A673 (cell line): ENCODE measurements at regions of chr11 and their contacts with region 1.

Region 1: DNA sequence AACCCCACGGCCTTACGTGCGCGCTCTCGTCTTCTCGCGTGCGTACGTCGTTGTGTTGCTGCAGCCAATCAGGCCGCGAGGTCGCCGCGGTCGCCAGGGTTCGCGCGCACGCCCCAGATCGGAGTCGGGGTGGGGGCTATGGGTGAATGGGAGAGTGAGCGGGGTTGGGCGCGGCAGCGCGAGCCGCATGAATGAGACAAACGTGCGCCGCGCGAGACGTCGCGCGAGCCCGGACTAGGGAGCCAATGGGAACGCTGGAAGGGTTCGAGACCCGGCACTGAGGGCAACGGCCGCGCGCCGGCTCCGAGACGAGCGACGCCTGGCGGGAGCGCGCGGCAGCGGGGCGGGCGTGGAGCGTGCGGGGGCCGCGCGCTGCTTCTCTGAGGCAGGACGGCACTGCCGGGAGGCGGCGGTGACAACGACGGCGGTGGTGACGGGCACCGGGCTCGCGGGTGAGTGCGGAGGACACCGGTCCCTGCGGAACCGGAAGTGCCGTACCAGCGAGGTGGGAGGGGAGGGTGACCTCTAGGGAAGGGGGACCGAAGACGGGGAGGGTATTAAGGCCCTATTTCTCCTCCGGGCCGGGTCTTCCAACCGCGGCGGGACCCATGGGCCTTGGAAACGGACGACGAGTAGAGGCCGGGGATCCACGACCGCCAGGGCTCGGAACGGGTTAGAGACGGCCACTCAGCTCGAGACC is at the start of gene ZDHHC5:
- DNase-seq: peak; percentile 100
- H3K4me3 ChIP-seq: peak within 1 kb of the TSS; percentile 70
- H3K27ac ChIP-seq: peak within 1 kb of the TSS; percentile 97
- H3K4me1 ChIP-seq: peaks cover 10% of the 10 kb centered on the region
- H3K27me3 ChIP-seq: no peaks in the 10 kb centered on the region
- CTCF ChIP-seq: peak; percentile 46
- total RNA-seq, gene ZDHHC5: 72.9 and 76.9 TPM in 2 replicates

Region 2: DNA sequence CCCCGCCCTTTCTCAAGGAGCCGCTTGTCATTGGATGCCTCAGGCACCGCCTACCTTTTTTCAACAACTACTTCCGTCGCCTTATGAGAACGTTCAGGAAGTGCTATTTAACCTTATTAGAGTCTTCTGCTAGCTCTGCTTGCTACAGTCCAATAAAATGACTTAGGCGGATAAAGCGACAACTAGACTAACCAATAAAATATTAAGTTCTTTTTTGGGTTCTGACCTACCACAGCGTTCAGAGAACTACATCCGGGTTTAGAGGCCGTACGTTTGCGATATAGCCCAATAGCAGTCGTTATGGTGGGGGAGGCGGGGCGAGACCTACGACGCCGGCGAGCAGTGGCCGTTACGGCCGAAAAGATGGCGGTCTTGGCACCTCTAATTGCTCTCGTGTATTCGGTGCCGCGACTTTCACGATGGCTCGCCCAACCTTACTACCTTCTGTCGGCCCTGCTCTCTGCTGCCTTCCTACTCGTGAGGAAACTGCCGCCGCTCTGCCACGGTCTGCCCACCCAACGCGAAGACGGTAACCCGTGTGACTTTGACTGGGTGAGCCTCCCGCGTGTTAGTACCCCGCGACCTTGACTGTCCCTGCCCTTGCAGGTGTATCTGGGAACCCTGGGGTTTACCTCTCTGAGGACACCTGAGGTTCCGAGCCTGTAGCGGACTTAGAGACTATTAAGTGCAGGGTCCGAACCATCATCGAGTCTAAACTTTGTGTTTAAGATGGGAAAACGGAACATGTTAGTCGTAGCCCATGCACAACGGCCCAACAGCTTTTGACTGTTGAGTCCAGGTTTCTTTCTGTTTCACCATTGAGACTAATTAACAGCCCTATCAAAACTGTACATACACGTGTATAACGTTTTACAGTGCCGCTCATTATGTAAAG is 44.6 kb after region 1 on chr11 and contains the start of gene TMX2:
- CTCF ChIA-PET with region 1: no interaction called
- POLR2A ChIA-PET with region 1: no interaction called
- intact Hi-C with region 1: loop called (anchors 5 kb)
- DNase-seq: peak; percentile 100
- H3K4me3 ChIP-seq: peak within 1 kb of the TSS; percentile 73
- H3K27ac ChIP-seq: peak within 1 kb of the TSS; percentile 90
- H3K4me1 ChIP-seq: peaks cover 22% of the 10 kb centered on the region
- H3K27me3 ChIP-seq: no peaks in the 10 kb centered on the region
- CTCF ChIP-seq: no peak
- total RNA-seq, gene TMX2: 166 and 186 TPM in 2 replicates